HepG2 (cell line): ENCODE measurements at regions of chr4 and their contacts with region 1.

Region 1: DNA sequence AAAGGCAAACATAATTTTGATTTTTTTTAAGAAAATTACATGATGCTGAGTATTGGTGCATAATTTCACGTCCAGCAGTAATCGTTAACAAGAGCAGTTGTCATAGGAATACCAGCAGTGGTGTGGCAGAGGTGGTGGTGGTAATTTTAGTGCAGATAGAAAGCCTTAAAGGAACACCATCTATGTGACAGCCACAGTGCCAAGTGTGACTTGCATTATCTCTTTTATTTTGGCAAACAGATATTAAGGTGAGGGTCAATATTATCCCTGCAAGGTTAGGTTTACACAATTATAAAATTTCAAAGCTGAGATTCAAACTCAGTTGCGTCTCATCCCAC is 944.1 kb upstream of the GRID2 start:
- DNase-seq: no peak
- ATAC-seq: no peak
- H3K4me3 ChIP-seq: no peak overlapping the region
- H3K27ac ChIP-seq: no peak overlapping the region
- H3K4me1 ChIP-seq: no peaks in the 10 kb centered on the region
- H3K27me3 ChIP-seq: no peaks in the 10 kb centered on the region
- CTCF ChIP-seq: no peak
- EP300 ChIP-seq: no peak
- POLR2A ChIP-seq: no peak
- RAD21 ChIP-seq: no peak

Region 2: DNA sequence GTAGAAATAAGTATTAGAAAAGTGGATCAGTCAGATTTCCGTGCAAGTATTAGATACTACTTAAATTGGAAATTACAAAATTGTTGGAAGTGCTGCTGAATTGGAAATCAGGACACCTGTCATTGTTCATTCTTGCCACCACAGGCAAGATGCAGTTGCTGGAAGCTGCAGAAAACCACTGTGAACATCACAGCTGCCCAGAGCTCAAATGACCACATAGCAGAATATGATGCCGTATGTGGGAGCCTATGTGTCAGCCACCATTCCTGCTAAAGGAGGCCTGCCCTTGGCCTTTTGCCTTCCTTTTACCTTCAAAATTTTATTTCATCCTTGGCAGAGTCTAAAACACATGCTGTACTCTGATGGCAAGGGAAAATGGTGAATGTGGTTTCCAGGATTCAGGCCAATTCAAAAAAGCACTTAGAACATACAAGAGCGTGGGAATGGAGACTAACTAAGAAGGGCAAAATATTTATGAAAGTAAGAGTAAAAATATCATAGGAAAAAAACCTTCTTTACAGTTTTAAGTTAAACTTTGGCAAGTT is 61.5 kb before region 1 on chr4:
- CTCF ChIA-PET with region 1: no interaction called
- POLR2A ChIA-PET with region 1: no interaction called
- in situ Hi-C with region 1: no loop called
- intact Hi-C with region 1: loop called (anchors 1 kb)
- DNase-seq: no peak
- ATAC-seq: no peak
- H3K4me3 ChIP-seq: no peak overlapping the region
- H3K27ac ChIP-seq: no peak overlapping the region
- H3K4me1 ChIP-seq: no peaks in the 10 kb centered on the region
- H3K27me3 ChIP-seq: no peaks in the 10 kb centered on the region
- CTCF ChIP-seq: no peak
- EP300 ChIP-seq: no peak
- POLR2A ChIP-seq: no peak
- RAD21 ChIP-seq: no peak